Activated naive CD4-positive, alpha-beta T cell treated with anti-CD3 and anti-CD28 coated beads, Interleukin-2, amount 10 ng/mL, durations not matched to agents 7 days and 5 days (primary cell): ENCODE measurements at regions of chr15 and their contacts with region 1.

Region 1: DNA sequence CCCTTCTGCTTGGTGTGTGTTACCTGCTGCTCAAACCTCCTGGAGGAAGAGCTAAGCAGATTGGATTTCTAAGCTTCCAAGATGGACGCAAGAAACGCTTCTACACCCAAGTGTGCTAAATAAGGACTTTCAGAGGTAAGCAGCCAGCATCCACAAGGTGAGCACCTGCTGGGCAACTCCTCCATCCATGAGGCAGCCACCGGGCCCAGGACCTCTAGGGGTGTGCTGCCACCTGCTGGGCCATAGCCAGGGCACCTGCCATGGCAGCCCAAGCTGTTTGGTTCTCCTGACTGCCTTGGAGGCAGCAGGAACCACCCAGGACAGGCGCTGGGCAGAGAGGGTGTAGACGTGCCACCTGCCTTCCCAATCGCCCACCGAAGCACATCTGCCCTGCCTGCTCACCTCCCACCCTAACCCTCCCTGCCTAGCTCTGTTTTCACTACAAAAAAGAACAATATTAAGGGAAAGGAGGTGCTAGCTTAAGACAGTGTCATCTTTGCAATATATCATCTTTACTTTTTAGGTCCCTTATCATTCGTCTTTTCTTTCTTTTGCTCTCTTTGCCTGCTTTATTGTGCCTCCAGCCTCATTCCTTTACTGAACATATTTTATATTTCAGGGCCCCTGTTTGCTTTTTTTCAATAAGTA is 12.9 kb downstream of the C15orf62 start:
- DNase-seq: peak; percentile 87
- H3K4me3 Mint-ChIP-seq: no peak overlapping the region
- H3K27ac Mint-ChIP-seq: no peak overlapping the region
- H3K4me1 Mint-ChIP-seq: peaks cover 15% of the 10 kb centered on the region
- H3K27me3 Mint-ChIP-seq: no peaks in the 10 kb centered on the region

Region 2: DNA sequence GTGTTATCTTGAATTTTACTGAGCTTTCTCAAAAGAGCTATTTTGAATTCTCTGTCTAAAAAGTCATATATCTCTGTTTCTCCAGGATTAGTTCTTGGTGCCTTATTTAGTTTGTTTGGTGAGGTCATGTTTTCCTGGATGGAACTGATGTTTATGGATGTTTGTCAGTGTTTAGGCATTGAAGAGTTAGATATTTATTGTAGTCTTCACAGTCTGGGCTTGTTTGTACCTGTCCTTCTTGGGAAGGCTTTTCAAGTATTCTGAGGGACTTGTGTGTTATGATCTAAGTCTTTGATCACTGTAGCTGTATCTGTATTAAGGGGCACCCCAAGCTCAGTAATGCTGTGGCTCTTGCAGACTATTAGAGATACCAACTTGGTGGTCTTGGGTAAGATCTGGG is 98.3 kb before region 1 on chr15:
- CTCF ChIA-PET with region 1: interaction called, 14 read pairs
- DNase-seq: no peak
- H3K4me3 Mint-ChIP-seq: no peak overlapping the region
- H3K27ac Mint-ChIP-seq: no peak overlapping the region
- H3K4me1 Mint-ChIP-seq: no peaks in the 10 kb centered on the region
- H3K27me3 Mint-ChIP-seq: no peaks in the 10 kb centered on the region

Region 3: GRCh38 chr15:40743921-40744814 is 38.5 kb before region 1 on chr15:
- CTCF ChIA-PET with region 1: interaction called, 11 read pairs
- DNase-seq: peak; percentile 75
- H3K4me3 Mint-ChIP-seq: peak overlapping the region; percentile 45
- H3K27ac Mint-ChIP-seq: peak overlapping the region; percentile 95
- H3K4me1 Mint-ChIP-seq: peaks cover 37% of the 10 kb centered on the region
- H3K27me3 Mint-ChIP-seq: no peaks in the 10 kb centered on the region

Region 4: GRCh38 chr15:40769274-40770146 is 13.2 kb before region 1 on chr15 and contains the start of gene C15orf62:
- CTCF ChIA-PET with region 1: interaction called, 13 read pairs
- DNase-seq: peak; percentile 59
- H3K4me3 Mint-ChIP-seq: peak within 1 kb of the TSS; percentile 33
- H3K27ac Mint-ChIP-seq: peak within 1 kb of the TSS; percentile 88
- H3K4me1 Mint-ChIP-seq: peaks cover 43% of the 10 kb centered on the region
- H3K27me3 Mint-ChIP-seq: no peaks in the 10 kb centered on the region

Region 5: GRCh38 chr15:41048397-41048796 is 265.7 kb after region 1 on chr15:
- CTCF ChIA-PET with region 1: no interaction called
- DNase-seq: no peak
- H3K4me3 Mint-ChIP-seq: no peak overlapping the region
- H3K27ac Mint-ChIP-seq: no peak overlapping the region
- H3K4me1 Mint-ChIP-seq: no peaks in the 10 kb centered on the region
- H3K27me3 Mint-ChIP-seq: no peaks in the 10 kb centered on the region